CD4-positive, alpha-beta memory T cell (primary cell): ENCODE measurements at regions of chr10 and their contacts with region 1.

Region 1: GRCh38 chr10:63166742-63167258 is 33.7 kb downstream of the NRBF2 start:
- DNase-seq: peak; percentile 50 to 61 (median 56)
- H3K4me3 ChIP-seq: no peak overlapping the region
- H3K4me3 Mint-ChIP-seq: no peak overlapping the region
- H3K27ac ChIP-seq: no peak overlapping the region
- H3K27ac Mint-ChIP-seq: peak overlapping the region in 2 of 7 donors; percentile 36 to 67
- H3K4me1 ChIP-seq: no peaks in the 10 kb centered on the region
- H3K4me1 Mint-ChIP-seq: peaks cover 0 to 2% (median 1%) of the 10 kb centered on the region in 4 donors
- H3K27me3 ChIP-seq: no peaks in the 10 kb centered on the region
- H3K27me3 Mint-ChIP-seq: no peaks in the 10 kb centered on the region

Region 2: GRCh38 chr10:63636812-63637211 is 470.0 kb after region 1 on chr10:
- CTCF ChIA-PET with region 1: interaction called, 115 read pairs
- POLR2A ChIA-PET with region 1: no interaction called
- intact Hi-C with region 1: no loop called
- DNase-seq: no peak
- H3K4me3 ChIP-seq: no peak overlapping the region
- H3K4me3 Mint-ChIP-seq: no peak overlapping the region
- H3K27ac ChIP-seq: no peak overlapping the region
- H3K27ac Mint-ChIP-seq: no peak overlapping the region
- H3K4me1 ChIP-seq: no peaks in the 10 kb centered on the region
- H3K4me1 Mint-ChIP-seq: no peaks in the 10 kb centered on the region
- H3K27me3 ChIP-seq: no peaks in the 10 kb centered on the region
- H3K27me3 Mint-ChIP-seq: peaks cover 0 to 1% of the 10 kb centered on the region in 2 donors

Region 3: GRCh38 chr10:63767138-63767801 is 600.5 kb after region 1 on chr10:
- CTCF ChIA-PET with region 1: interaction called, 10 read pairs
- POLR2A ChIA-PET with region 1: no interaction called
- intact Hi-C with region 1: loop called (anchors 2 kb)
- DNase-seq: no peak
- H3K4me3 ChIP-seq: no peak overlapping the region
- H3K4me3 Mint-ChIP-seq: no peak overlapping the region
- H3K27ac ChIP-seq: no peak overlapping the region
- H3K27ac Mint-ChIP-seq: no peak overlapping the region
- H3K4me1 ChIP-seq: no peaks in the 10 kb centered on the region
- H3K4me1 Mint-ChIP-seq: no peaks in the 10 kb centered on the region
- H3K27me3 ChIP-seq: no peaks in the 10 kb centered on the region
- H3K27me3 Mint-ChIP-seq: peaks cover 0 to 10% of the 10 kb centered on the region in 2 donors